Activated B cell treated with CpG ODN at 0.5 μM for 24 hours (primary cell): ENCODE measurements at regions of chr1 and their contacts with region 1.

Region 1: DNA sequence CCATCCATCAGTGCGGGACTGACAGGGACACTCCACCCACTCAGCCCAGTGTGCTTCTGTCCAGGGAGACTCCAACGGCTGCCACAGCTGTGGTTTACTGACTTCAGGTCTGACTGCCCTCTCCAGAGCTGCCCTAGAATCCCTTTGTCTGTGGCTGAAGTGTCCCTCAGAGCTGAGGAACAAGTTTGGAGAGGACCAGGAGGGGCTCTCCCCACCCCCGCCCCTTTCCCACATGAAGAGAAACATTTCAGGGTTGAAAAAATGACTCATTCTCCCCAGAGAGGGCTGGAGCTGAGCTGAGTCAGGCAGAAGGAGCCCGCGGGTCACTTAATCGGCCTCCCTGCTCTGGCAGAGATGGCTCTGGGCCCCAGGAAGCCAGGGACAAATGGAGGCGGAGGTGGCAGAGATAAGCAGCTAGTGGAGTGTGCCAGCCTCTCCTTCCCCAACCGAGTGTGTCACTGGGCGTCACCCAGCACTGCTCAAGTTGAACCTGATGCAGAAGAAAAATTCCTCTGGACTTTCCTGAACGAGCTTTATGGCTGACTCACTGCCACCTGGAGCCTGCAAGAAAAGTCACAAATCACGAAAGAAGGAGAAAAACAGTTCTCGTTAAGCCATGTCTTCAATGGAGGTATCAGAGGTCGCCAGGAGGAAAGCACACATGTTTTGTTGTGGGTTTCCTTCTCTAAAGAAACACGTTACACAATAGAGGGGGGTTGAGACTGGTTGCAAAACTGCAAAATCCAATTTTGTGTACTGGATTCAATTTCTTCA is 34.3 kb upstream of the ECE1 start:
- DNase-seq: peak; percentile 51
- ATAC-seq: peak; percentile 71
- H3K4me3 Mint-ChIP-seq: peak overlapping the region; percentile 72
- H3K27ac Mint-ChIP-seq: peak overlapping the region; percentile 90
- H3K4me1 Mint-ChIP-seq: peaks cover 87% of the 10 kb centered on the region
- H3K27me3 Mint-ChIP-seq: no peaks in the 10 kb centered on the region
- CTCF ChIP-seq: no peak

Region 2: DNA sequence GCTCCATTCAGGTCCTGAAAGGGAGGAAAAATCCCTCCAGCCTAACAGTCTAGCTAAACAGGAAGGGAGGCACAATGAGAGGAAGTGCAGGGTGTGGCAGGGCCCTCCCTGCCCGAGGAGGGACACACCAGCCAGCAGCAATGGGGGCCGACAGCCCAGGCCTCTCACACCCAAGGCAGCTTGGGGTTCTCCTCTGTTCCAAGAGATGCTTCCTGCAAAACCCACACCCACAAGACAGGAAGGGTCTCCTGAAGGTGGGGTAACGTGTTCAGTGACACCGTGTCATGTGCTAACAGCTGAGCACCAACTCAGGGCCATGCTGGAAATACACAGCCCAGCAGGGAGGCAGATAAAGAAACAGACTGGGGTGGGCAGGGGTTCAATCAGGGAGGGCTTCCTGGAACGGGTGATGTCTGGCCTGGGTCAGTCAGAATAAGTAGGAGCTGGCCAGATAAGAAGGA is 44.5 kb before region 1 on chr1:
- CTCF ChIA-PET with region 1: no interaction called
- POLR2A ChIA-PET with region 1: interaction called, 19 read pairs
- intact Hi-C with region 1: no loop called
- DNase-seq: no peak
- ATAC-seq: peak; percentile 43
- H3K4me3 Mint-ChIP-seq: peak overlapping the region; percentile 29
- H3K27ac Mint-ChIP-seq: peak overlapping the region; percentile 81
- H3K4me1 Mint-ChIP-seq: peaks cover 44% of the 10 kb centered on the region
- H3K27me3 Mint-ChIP-seq: no peaks in the 10 kb centered on the region
- CTCF ChIP-seq: no peak

Region 3: DNA sequence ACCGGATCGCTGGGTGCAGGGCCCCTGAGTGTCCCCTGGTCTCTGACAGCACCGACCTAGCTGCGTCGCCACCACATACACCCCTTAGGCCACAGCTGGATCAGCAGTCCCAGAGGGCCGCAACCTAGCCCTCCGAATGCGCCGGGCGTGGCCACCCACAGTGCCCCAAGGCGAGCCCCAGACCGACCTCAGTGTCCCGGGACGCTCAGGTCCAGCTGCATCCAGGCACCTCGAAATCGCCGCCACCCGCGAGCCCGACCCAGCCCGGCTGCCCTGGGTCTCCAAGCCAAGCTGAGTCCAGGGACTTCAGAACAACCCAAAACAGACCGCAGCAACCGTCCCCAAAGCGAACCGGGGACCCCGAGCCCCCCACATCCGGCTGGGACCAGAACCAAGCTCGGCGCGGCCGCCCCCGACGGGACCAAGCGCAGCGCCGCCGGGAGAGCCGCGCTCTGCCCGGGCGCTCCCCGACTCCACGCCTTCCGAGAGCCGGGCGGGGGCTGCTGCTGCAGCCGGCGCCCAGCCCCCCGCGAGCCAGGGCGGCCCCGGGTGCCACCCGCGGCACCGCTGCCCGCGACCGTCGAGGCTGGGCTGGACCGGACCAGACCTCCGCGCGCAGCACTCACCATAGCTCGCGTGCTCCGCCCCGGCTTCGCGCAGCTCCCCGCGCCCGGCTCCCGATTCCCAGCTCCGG is 20.3 kb after region 1 on chr1:
- CTCF ChIA-PET with region 1: interaction called, 5 read pairs
- POLR2A ChIA-PET with region 1: interaction called, 44 read pairs
- intact Hi-C with region 1: loop called (anchors 1 kb)
- DNase-seq: peak; percentile 36
- ATAC-seq: peak; percentile 22
- H3K4me3 Mint-ChIP-seq: peak overlapping the region; percentile 92
- H3K27ac Mint-ChIP-seq: peak overlapping the region; percentile 77
- H3K4me1 Mint-ChIP-seq: peaks cover 43% of the 10 kb centered on the region
- H3K27me3 Mint-ChIP-seq: no peaks in the 10 kb centered on the region
- CTCF ChIP-seq: no peak

Region 4: GRCh38 chr1:21539933-21540332 is 215.4 kb after region 1 on chr1:
- CTCF ChIA-PET with region 1: no interaction called
- POLR2A ChIA-PET with region 1: no interaction called
- intact Hi-C with region 1: no loop called
- DNase-seq: no peak
- ATAC-seq: no peak
- H3K4me3 Mint-ChIP-seq: no peak overlapping the region
- H3K27ac Mint-ChIP-seq: no peak overlapping the region
- H3K4me1 Mint-ChIP-seq: peaks cover under 1% of the 10 kb centered on the region
- H3K27me3 Mint-ChIP-seq: peaks cover 16% of the 10 kb centered on the region
- CTCF ChIP-seq: no peak